T-cell (primary cell): ENCODE measurements at regions of chr17 and their contacts with region 1.

Region 1: GRCh38 chr17:45828628-45829027 is 16.1 kb upstream of the SPPL2C start:
- DNase-seq: no peak
- ATAC-seq: no peak
- H3K4me3 ChIP-seq: no peak overlapping the region
- H3K4me3 Mint-ChIP-seq: no peak overlapping the region
- H3K27ac ChIP-seq: no peak overlapping the region
- H3K27ac Mint-ChIP-seq: no peak overlapping the region
- H3K4me1 ChIP-seq: peaks cover 0 to 12% of the 10 kb centered on the region in 2 experiments
- H3K4me1 Mint-ChIP-seq: peaks cover 0 to 18% (median 11%) of the 10 kb centered on the region in 3 donors
- H3K27me3 ChIP-seq: peaks cover 0 to 44% of the 10 kb centered on the region in 2 experiments
- H3K27me3 Mint-ChIP-seq: peaks cover 0 to 8% of the 10 kb centered on the region in 2 donors

Region 2: GRCh38 chr17:45640141-45640850 is 188.3 kb before region 1 on chr17:
- CTCF ChIA-PET with region 1: interaction called, 5 to 24 read pairs
- POLR2A ChIA-PET with region 1: no interaction called
- DNase-seq: peak; percentile 20 to 87 (median 63)
- ATAC-seq: peak; percentile 66 to 71 (median 68)
- H3K4me3 ChIP-seq: no peak overlapping the region
- H3K4me3 Mint-ChIP-seq: no peak overlapping the region
- H3K27ac ChIP-seq: no peak overlapping the region
- H3K27ac Mint-ChIP-seq: peak overlapping the region in 1 of 2 donors; percentile 59
- H3K4me1 ChIP-seq: peaks cover 0 to 7% of the 10 kb centered on the region in 2 experiments
- H3K4me1 Mint-ChIP-seq: peaks cover 6 to 7% (median 7%) of the 10 kb centered on the region in 3 donors
- H3K27me3 ChIP-seq: no peaks in the 10 kb centered on the region
- H3K27me3 Mint-ChIP-seq: no peaks in the 10 kb centered on the region

Region 3: DNA sequence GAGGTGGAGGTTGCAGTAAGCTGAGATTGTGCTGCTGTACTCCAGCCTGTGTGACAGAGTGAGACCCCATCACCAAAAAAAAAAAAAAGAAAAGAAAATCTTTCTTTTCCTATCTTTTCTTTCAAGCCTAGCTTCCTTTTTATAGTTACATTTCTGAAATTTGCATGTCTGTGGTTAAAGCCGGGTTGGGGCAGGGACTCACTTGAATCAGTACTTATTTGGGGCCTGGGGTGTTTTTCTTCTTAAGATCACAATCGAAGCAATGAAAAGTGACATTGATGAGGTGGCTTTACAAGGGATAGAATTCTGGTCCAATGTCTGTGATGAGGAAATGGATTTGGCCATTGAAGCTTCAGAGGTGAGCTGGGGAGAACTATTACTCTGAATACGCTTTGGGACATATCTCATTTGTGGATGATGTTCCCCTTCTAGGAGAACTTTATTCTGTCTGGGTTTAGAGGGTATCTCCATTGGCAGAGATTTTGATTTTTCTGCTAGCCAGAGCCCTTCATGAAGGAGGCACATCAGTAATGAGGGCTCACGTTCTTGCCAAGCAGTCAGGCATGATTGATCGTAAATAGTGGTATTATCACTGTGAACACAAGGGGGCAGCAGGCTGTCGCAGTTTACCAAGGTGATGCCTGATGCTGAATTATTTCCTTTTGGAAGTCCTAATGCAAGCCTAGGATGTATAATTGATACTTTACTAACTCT is 1835.4 kb after region 1 on chr17:
- CTCF ChIA-PET with region 1: no interaction called
- POLR2A ChIA-PET with region 1: no interaction called
- DNase-seq: peak; percentile 13 to 84 (median 51)
- ATAC-seq: peak; percentile 59 to 71 (median 66)
- H3K4me3 ChIP-seq: no peak overlapping the region
- H3K4me3 Mint-ChIP-seq: peak overlapping the region in 1 of 3 donors; percentile 6
- H3K27ac ChIP-seq: peak overlapping the region; percentile 37
- H3K27ac Mint-ChIP-seq: peak overlapping the region; percentile 80 to 87
- H3K4me1 ChIP-seq: peaks cover 10 to 20% of the 10 kb centered on the region in 2 experiments
- H3K4me1 Mint-ChIP-seq: peaks cover 19 to 29% (median 24%) of the 10 kb centered on the region in 3 donors
- H3K27me3 ChIP-seq: no peaks in the 10 kb centered on the region
- H3K27me3 Mint-ChIP-seq: no peaks in the 10 kb centered on the region